Naive thymus-derived CD4-positive, alpha-beta T cell (primary cell): ENCODE measurements at regions of chr10 and their contacts with region 1.

Region 1: GRCh38 chr10:61903221-61903927 is 1.9 kb downstream of the ARID5B start:
- DNase-seq: peak; percentile 56 to 78 (median 69)
- ATAC-seq: peak; percentile 58
- H3K4me3 ChIP-seq: peak overlapping the region; percentile 96
- H3K4me3 Mint-ChIP-seq: peak overlapping the region; percentile 81 to 100 (median 94)
- H3K27ac ChIP-seq: peak overlapping the region; percentile 92
- H3K27ac Mint-ChIP-seq: peak overlapping the region; percentile 93 to 100 (median 97)
- H3K4me1 ChIP-seq: peaks cover 18 to 25% of the 10 kb centered on the region in 2 donors
- H3K4me1 Mint-ChIP-seq: peaks cover 14 to 59% (median 49%) of the 10 kb centered on the region in 7 donors
- H3K27me3 ChIP-seq: no peaks in the 10 kb centered on the region
- H3K27me3 Mint-ChIP-seq: peaks cover 0 to 2% (median 0%) of the 10 kb centered on the region in 5 donors

Region 2: DNA sequence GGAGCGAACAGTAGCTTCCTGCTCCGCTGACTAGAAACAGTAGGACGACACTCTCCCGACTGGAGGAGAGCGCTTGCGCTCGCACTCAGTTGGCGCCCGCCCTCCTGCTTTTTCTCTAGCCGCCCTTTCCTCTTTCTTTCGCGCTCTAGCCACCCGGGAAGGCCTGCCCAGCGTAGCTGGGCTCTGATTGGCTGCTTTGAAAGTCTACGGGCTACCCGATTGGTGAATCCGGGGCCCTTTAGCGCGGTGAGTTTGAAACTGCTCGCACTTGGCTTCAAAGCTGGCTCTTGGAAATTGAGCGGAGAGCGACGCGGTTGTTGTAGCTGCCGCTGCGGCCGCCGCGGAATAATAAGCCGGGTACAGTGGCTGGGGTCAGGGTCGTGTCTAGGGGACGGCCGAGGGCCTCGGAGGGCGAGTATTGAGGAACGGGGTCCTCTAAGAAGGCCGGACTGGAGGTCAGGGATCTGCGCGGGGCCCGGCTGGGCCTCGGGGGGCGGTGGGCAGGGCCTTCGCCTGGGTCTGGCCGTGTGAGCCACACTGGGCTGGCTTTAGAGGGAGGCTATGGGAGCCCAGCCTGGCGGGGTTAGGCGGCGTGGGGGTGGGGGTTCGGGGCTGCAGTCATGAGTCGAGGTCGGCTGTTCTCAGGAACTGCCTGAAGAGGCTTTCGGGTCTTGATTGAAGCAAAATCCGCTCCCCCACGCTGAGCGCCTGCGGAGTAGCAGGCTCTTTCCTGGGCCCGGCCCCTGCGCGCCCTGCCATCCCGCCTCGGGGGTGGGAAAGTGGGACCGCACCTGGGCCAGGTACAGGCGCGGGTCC is 1125.0 kb before region 1 on chr10 and contains the start of gene CDK1:
- CTCF ChIA-PET with region 1: no interaction called
- POLR2A ChIA-PET with region 1: no interaction called
- intact Hi-C with region 1: loop called in 1 of 2 experiments (anchors 1 kb)
- DNase-seq: peak; percentile 80 to 96 (median 92)
- ATAC-seq: peak; percentile 99
- H3K4me3 ChIP-seq: peak within 1 kb of the TSS; percentile 80
- H3K4me3 Mint-ChIP-seq: peak within 1 kb of the TSS; percentile 93 to 98 (median 96)
- H3K27ac ChIP-seq: peak within 1 kb of the TSS; percentile 55
- H3K27ac Mint-ChIP-seq: peak within 1 kb of the TSS; percentile 1 to 97 (median 80)
- H3K4me1 ChIP-seq: no peaks in the 10 kb centered on the region
- H3K4me1 Mint-ChIP-seq: peaks cover 6 to 40% (median 15%) of the 10 kb centered on the region in 7 donors
- H3K27me3 ChIP-seq: no peaks in the 10 kb centered on the region
- H3K27me3 Mint-ChIP-seq: peaks cover 0 to 3% (median 0%) of the 10 kb centered on the region in 5 donors
- total RNA-seq, gene CDK1: 0.50 to 90.7 (median 1.1) TPM

Region 3: GRCh38 chr10:61758440-61758839 is 144.9 kb before region 1 on chr10:
- CTCF ChIA-PET with region 1: no interaction called
- POLR2A ChIA-PET with region 1: no interaction called
- intact Hi-C with region 1: no loop called
- DNase-seq: no peak
- ATAC-seq: no peak
- H3K4me3 ChIP-seq: no peak overlapping the region
- H3K4me3 Mint-ChIP-seq: no peak overlapping the region
- H3K27ac ChIP-seq: no peak overlapping the region
- H3K27ac Mint-ChIP-seq: no peak overlapping the region
- H3K4me1 ChIP-seq: no peaks in the 10 kb centered on the region
- H3K4me1 Mint-ChIP-seq: peaks cover 0 to 14% (median 2%) of the 10 kb centered on the region in 7 donors
- H3K27me3 ChIP-seq: no peaks in the 10 kb centered on the region
- H3K27me3 Mint-ChIP-seq: peaks cover 0 to 4% (median 0%) of the 10 kb centered on the region in 5 donors

Region 4: DNA sequence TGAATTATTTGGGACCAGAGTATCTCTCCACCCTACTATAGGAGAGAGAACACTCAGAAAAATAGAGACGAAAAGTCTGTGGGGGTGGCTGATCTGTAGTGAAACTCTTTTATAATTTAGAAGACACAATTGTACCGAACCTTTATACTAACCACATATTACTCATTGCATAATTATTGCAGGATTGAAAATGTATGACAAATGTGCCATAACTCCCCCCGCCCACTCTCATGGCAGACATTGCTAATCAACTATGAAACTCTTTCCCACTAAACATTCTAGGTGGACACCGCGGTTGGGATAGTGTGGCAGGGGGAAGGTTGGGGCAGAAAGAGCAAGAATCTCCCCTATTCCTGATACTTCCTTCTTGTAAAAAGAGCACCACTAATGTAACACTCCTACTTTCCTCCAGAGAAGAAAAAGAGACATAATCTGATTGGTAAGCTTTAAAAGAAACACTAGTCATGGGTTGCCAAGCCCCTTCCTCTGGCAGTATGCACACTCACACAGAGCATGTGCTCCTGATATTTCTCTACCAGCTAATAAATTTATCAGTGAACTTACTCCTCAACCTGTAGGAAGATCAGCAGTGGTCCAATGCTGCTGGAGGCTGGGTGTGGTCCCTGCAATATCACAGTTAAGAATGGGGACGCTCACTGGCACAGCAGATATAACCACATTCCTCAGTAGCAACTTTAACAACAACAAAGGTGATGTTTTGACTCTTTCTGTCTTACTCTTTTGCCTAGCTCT is 20.6 kb before region 1 on chr10:
- CTCF ChIA-PET with region 1: no interaction called
- POLR2A ChIA-PET with region 1: no interaction called
- intact Hi-C with region 1: no loop called
- DNase-seq: peak in 1 of 9 donors; percentile 66
- ATAC-seq: no peak
- H3K4me3 ChIP-seq: no peak overlapping the region
- H3K4me3 Mint-ChIP-seq: no peak overlapping the region
- H3K27ac ChIP-seq: no peak overlapping the region
- H3K27ac Mint-ChIP-seq: no peak overlapping the region
- H3K4me1 ChIP-seq: no peaks in the 10 kb centered on the region
- H3K4me1 Mint-ChIP-seq: peaks cover 0 to 10% (median 0%) of the 10 kb centered on the region in 7 donors
- H3K27me3 ChIP-seq: no peaks in the 10 kb centered on the region
- H3K27me3 Mint-ChIP-seq: peaks cover 0 to 3% (median 0%) of the 10 kb centered on the region in 5 donors

Region 5: DNA sequence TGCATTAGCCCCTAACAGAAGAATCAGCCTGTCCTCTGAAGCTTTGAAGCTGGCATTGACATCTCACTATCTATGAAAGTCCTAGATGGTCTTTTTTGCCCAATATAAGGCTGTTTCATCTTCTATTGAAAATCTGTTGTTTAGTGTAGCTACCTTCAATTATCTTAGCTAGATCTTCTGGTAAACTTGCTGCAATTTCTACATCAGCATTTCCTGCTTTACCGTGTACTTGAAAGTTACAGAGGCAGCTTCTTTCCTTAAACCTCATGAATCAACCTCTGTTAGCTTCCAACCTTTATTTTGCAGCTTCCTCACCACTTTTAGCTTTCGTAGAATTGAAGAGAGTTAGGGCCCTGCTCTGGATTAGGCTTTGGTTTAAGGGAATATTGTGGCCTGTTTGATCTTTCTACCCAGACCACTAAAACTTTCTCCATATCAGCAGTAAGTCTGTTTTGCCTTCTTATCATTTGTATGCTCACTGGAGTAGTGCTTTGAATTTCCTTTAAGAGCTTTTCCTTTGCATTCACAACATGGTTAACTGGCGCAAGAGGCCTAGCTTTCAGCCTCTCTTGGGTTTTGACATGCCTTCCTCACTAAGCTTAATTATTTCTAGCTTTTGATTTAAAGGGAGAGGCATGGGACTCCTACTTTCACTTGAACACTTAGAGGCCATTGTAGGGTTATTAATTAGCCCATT is 30.6 kb after region 1 on chr10:
- CTCF ChIA-PET with region 1: interaction called, 3 read pairs
- POLR2A ChIA-PET with region 1: interaction called, 7 read pairs
- intact Hi-C with region 1: loop called in 1 of 2 experiments (anchors 1 kb)
- DNase-seq: peak in 6 of 9 donors; percentile 8 to 34 (median 12)
- ATAC-seq: peak; percentile 57
- H3K4me3 ChIP-seq: no peak overlapping the region
- H3K4me3 Mint-ChIP-seq: peak overlapping the region in 6 of 10 donors; percentile 13 to 67 (median 34)
- H3K27ac ChIP-seq: peak overlapping the region; percentile 7
- H3K27ac Mint-ChIP-seq: peak overlapping the region; percentile 11 to 89 (median 80)
- H3K4me1 ChIP-seq: peaks cover 25 to 41% of the 10 kb centered on the region in 2 donors
- H3K4me1 Mint-ChIP-seq: peaks cover 44 to 88% (median 76%) of the 10 kb centered on the region in 7 donors
- H3K27me3 ChIP-seq: no peaks in the 10 kb centered on the region
- H3K27me3 Mint-ChIP-seq: no peaks in the 10 kb centered on the region

Region 6: DNA sequence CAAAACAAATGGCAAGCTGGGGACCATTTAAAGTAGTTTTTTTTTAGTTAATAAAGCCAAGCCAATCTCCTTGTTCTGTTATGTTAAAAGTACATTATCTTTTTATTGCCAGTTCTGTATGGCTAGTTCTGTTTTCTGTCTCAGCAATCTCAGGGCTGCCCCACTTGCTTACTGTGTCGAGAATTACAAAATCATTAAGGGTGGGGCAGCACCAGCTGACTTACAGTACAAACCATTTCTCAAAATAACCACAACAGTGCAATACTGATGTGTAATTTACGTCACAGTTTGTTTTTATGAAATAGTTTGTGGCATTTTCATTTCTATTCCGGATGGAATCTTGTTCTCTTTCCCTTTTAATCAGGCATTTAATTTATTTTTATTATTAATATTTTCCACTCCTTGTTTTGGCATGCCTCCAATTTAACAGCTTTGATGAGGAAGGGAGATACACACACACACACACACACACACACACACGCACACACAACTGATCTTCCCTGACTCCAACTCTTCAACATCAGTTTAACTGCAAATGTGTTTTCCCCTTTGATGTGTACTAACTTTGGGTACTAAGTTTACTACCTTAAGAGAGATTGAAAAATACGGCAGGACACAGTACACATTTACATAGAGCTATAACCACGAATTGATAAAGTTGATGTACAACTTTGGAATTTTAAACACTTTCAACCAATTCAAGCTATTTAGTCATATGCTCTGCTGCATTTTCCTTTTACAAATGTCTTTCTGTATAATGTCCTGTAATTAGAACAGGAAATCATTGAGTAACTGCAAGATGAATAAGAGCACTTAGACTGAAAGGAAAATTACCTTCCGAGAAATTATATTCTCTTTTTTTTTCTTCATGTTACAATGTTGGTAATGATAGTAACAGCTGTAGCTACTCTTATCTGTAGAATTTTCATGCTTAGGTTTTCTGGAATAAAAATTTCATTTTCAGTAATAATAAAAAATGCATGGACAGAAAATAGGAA is 89.6 kb after region 1 on chr10:
- CTCF ChIA-PET with region 1: interaction called, 3 read pairs
- POLR2A ChIA-PET with region 1: interaction called, 10 read pairs
- intact Hi-C with region 1: loop called (anchors 1 kb)
- DNase-seq: peak in 8 of 9 donors; percentile 39 to 85 (median 72)
- ATAC-seq: peak; percentile 90
- H3K4me3 ChIP-seq: peak overlapping the region; percentile 28
- H3K4me3 Mint-ChIP-seq: peak overlapping the region in 9 of 10 donors; percentile 61 to 89 (median 64)
- H3K27ac ChIP-seq: peak overlapping the region; percentile 63
- H3K27ac Mint-ChIP-seq: peak overlapping the region; percentile 82 to 96 (median 93)
- H3K4me1 ChIP-seq: peaks cover 33 to 37% of the 10 kb centered on the region in 2 donors
- H3K4me1 Mint-ChIP-seq: peaks cover 28 to 81% (median 70%) of the 10 kb centered on the region in 7 donors
- H3K27me3 ChIP-seq: no peaks in the 10 kb centered on the region
- H3K27me3 Mint-ChIP-seq: no peaks in the 10 kb centered on the region

Region 7: GRCh38 chr10:62082729-62083411 is 179.5 kb after region 1 on chr10:
- CTCF ChIA-PET with region 1: no interaction called
- POLR2A ChIA-PET with region 1: interaction called, 3 read pairs
- intact Hi-C with region 1: loop called in 1 of 2 experiments (anchors 2 kb)
- DNase-seq: peak in 7 of 9 donors; percentile 23 to 70 (median 53)
- ATAC-seq: peak; percentile 83
- H3K4me3 ChIP-seq: peak overlapping the region; percentile 35
- H3K4me3 Mint-ChIP-seq: peak overlapping the region; percentile 46 to 79 (median 72)
- H3K27ac ChIP-seq: peak overlapping the region; percentile 63
- H3K27ac Mint-ChIP-seq: peak overlapping the region; percentile 69 to 92 (median 87)
- H3K4me1 ChIP-seq: peaks cover 23 to 41% of the 10 kb centered on the region in 2 donors
- H3K4me1 Mint-ChIP-seq: peaks cover 28 to 72% (median 58%) of the 10 kb centered on the region in 7 donors
- H3K27me3 ChIP-seq: no peaks in the 10 kb centered on the region
- H3K27me3 Mint-ChIP-seq: no peaks in the 10 kb centered on the region

Region 8: GRCh38 chr10:62268399-62269114 is 365.2 kb after region 1 on chr10 and contains the start of gene RTKN2:
- CTCF ChIA-PET with region 1: interaction called, 3 read pairs
- POLR2A ChIA-PET with region 1: no interaction called
- intact Hi-C with region 1: loop called in 1 of 2 experiments (anchors 5 kb)
- DNase-seq: peak; percentile 52 to 76 (median 64)
- ATAC-seq: peak; percentile 89
- H3K4me3 ChIP-seq: peak within 1 kb of the TSS; percentile 69
- H3K4me3 Mint-ChIP-seq: peak within 1 kb of the TSS; percentile 84 to 96 (median 88)
- H3K27ac ChIP-seq: peak within 1 kb of the TSS; percentile 12
- H3K27ac Mint-ChIP-seq: peak within 1 kb of the TSS in 8 of 9 donors; percentile 8 to 75 (median 46)
- H3K4me1 ChIP-seq: peaks cover 0 to 5% of the 10 kb centered on the region in 2 donors
- H3K4me1 Mint-ChIP-seq: peaks cover 9 to 19% (median 14%) of the 10 kb centered on the region in 7 donors
- H3K27me3 ChIP-seq: peaks cover 0 to 9% of the 10 kb centered on the region in 2 donors
- H3K27me3 Mint-ChIP-seq: peaks cover 4 to 43% (median 16%) of the 10 kb centered on the region in 5 donors
- total RNA-seq, gene RTKN2: 1.4 to 7.8 (median 3.0) TPM

Region 9: DNA sequence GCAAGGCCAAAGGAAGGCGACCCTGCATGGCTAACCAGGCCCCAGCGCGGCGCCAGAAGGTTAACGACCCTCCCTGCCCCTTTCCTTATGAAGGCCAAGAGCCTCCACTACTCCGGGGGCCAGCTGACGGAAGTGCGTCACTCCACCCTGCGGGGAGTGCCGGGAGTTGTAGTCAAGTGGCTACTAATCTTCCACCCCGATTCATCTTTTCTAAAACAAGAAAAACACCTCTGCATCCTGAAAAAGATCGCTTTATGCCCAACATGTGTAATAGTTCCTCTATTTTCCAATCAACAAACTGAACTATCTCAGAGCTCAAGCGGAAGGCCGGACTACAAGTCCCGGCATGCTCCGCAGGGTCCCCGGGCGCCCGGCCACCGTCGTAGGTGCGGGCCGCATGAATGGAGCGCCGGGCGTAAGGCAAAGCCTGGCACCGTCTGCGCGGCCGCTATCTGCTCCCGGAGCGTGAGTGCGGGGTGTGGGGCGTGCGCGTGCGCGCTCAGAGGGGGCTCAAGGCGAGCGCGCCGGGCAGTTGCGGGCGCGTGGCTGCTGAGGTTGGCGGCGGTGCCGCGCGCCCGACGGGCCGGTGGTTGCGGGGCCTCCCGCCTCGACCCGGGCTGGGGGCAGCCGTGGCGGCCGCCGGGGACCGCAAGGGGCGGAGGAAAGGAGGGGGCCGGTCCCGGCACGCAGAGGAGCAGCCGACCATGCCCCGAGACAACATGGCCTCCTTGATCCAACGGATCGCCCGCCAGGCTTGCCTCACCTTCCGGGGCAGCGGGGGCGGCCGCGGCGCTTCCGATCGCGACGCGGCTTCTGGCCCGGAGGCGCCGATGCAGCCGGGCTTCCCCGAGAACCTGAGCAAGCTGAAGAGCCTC is 901.2 kb after region 1 on chr10 and contains the start of gene ADO:
- CTCF ChIA-PET with region 1: no interaction called
- POLR2A ChIA-PET with region 1: interaction called, 3 read pairs
- intact Hi-C with region 1: loop called (anchors 2 to 5 kb)
- DNase-seq: peak; percentile 69 to 86 (median 80)
- ATAC-seq: peak; percentile 93
- H3K4me3 ChIP-seq: peak within 1 kb of the TSS; percentile 66
- H3K4me3 Mint-ChIP-seq: peak within 1 kb of the TSS; percentile 90 to 100 (median 96)
- H3K27ac ChIP-seq: peak within 1 kb of the TSS; percentile 86
- H3K27ac Mint-ChIP-seq: peak within 1 kb of the TSS; percentile 93 to 100 (median 98)
- H3K4me1 ChIP-seq: peaks cover 15 to 19% of the 10 kb centered on the region in 2 donors
- H3K4me1 Mint-ChIP-seq: peaks cover 22 to 47% (median 39%) of the 10 kb centered on the region in 7 donors
- H3K27me3 ChIP-seq: no peaks in the 10 kb centered on the region
- H3K27me3 Mint-ChIP-seq: peaks cover 0 to 20% (median 0%) of the 10 kb centered on the region in 5 donors
- total RNA-seq, gene ADO: 9.8 to 21.3 (median 15.6) TPM